ENCODE measurements at regions of chr11 and their contacts with region 1.

Region 1: GRCh38 chr11:47248664-47249377 is at the start of gene ACP2:
- DNase-seq: peak; percentile 70 to 93 (median 85)
- ATAC-seq: peak; percentile 97
- H3K4me3 ChIP-seq: peak within 1 kb of the TSS; percentile 81 to 90
- H3K4me3 Mint-ChIP-seq: peak within 1 kb of the TSS; percentile 100
- H3K27ac ChIP-seq: peak within 1 kb of the TSS; percentile 63 to 83
- H3K27ac Mint-ChIP-seq: peak within 1 kb of the TSS; percentile 100
- H3K4me1 ChIP-seq: peaks cover 17% of the 10 kb centered on the region
- H3K4me1 Mint-ChIP-seq: peaks cover 32% of the 10 kb centered on the region
- H3K27me3 ChIP-seq: no peaks in the 10 kb centered on the region
- H3K27me3 Mint-ChIP-seq: no peaks in the 10 kb centered on the region
- CTCF ChIP-seq: no peak
- total RNA-seq, gene ACP2: 18.3 to 22.6 TPM

Region 2: GRCh38 chr11:46936138-46937110 is 312.4 kb before region 1 on chr11 and contains the start of gene CSTPP1:
- CTCF ChIA-PET with region 1: no interaction called
- POLR2A ChIA-PET with region 1: interaction called, 3 read pairs
- intact Hi-C with region 1: loop called in 1 of 2 experiments (anchors 1 kb)
- DNase-seq: peak; percentile 80 to 97 (median 93)
- ATAC-seq: peak; percentile 96
- H3K4me3 ChIP-seq: peak within 1 kb of the TSS; percentile 73 to 82
- H3K4me3 Mint-ChIP-seq: peak within 1 kb of the TSS; percentile 97
- H3K27ac ChIP-seq: peak within 1 kb of the TSS; percentile 58 to 71
- H3K27ac Mint-ChIP-seq: peak within 1 kb of the TSS; percentile 95
- H3K4me1 ChIP-seq: peaks cover 9% of the 10 kb centered on the region
- H3K4me1 Mint-ChIP-seq: peaks cover 20% of the 10 kb centered on the region
- H3K27me3 ChIP-seq: no peaks in the 10 kb centered on the region
- H3K27me3 Mint-ChIP-seq: peaks cover 6% of the 10 kb centered on the region
- CTCF ChIP-seq: no peak
- total RNA-seq, gene CSTPP1: 4.1 to 4.6 TPM

Region 3: GRCh38 chr11:47213985-47214564 is 34.7 kb before region 1 on chr11:
- CTCF ChIA-PET with region 1: interaction called, 12 read pairs
- POLR2A ChIA-PET with region 1: interaction called, 29 read pairs
- intact Hi-C with region 1: loop called (anchors 1 kb)
- DNase-seq: peak; percentile 64 to 90 (median 84)
- ATAC-seq: peak; percentile 67
- H3K4me3 ChIP-seq: peak overlapping the region; percentile 65 to 95
- H3K4me3 Mint-ChIP-seq: peak overlapping the region; percentile 96
- H3K27ac ChIP-seq: peak overlapping the region; percentile 85 to 93
- H3K27ac Mint-ChIP-seq: peak overlapping the region; percentile 97
- H3K4me1 ChIP-seq: peaks cover 16% of the 10 kb centered on the region
- H3K4me1 Mint-ChIP-seq: peaks cover 31% of the 10 kb centered on the region
- H3K27me3 ChIP-seq: no peaks in the 10 kb centered on the region
- H3K27me3 Mint-ChIP-seq: no peaks in the 10 kb centered on the region
- CTCF ChIP-seq: no peak

Region 4: GRCh38 chr11:47259178-47259977 is 10.6 kb after region 1 on chr11:
- CTCF ChIA-PET with region 1: interaction called, 23 read pairs
- POLR2A ChIA-PET with region 1: interaction called, 8 read pairs
- intact Hi-C with region 1: no loop called
- DNase-seq: peak in 4 of 9 experiments; percentile 39 to 61 (median 48)
- ATAC-seq: peak; percentile 90
- H3K4me3 ChIP-seq: no peak overlapping the region
- H3K4me3 Mint-ChIP-seq: no peak overlapping the region
- H3K27ac ChIP-seq: no peak overlapping the region
- H3K27ac Mint-ChIP-seq: no peak overlapping the region
- H3K4me1 ChIP-seq: peaks cover 10% of the 10 kb centered on the region
- H3K4me1 Mint-ChIP-seq: peaks cover 10% of the 10 kb centered on the region
- H3K27me3 ChIP-seq: no peaks in the 10 kb centered on the region
- H3K27me3 Mint-ChIP-seq: no peaks in the 10 kb centered on the region
- CTCF ChIP-seq: peak; percentile 23

Region 5: DNA sequence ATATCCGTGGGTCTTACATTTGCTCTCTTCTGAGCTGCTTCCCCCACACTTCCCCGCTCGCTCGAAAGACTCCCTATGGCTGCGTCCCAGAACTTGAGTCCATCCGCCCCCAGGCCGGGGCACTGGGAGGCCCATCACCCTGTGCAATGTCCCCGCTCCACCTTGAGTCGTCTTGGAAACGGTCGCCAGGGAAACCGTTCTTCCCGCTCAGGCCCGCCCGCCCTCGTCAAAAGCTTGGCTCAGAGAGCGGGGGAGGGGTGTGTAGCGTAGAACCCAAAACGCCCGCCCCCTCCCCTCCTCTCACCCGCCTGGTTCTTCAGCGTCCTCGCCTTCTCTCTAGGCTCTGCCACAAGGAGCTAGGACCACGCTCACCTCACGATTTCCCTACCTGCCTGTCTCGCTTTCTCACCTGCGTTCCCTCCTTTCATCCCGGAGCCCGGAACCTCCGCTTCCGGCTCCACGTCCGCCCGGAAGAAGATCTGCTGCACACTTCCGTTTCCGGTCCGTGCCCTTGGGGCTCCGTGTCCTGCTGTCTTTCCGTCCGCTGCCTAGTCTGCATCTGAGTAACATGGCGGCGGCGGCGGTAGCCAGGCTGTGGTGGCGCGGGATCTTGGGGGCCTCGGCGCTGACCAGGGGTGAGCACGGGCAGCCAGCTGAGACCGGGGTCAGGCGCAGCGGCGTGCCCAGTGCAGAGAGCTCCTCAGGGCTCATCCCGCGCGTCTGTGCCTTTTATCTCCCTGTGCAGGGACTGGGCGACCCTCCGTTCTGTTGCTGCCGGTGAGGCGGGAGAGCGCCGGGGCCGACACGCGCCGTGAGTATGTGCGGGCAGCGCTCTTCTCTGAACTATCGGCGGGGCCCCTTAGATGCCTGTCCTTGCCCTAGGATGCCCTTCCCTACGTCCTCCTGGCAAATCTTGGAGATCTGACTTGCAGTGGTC is 330.0 kb after region 1 on chr11 and contains the starts of genes KBTBD4 and NDUFS3:
- CTCF ChIA-PET with region 1: no interaction called
- POLR2A ChIA-PET with region 1: no interaction called
- intact Hi-C with region 1: loop called (anchors 1 kb)
- DNase-seq: peak; percentile 74 to 95 (median 89)
- ATAC-seq: peak; percentile 94
- H3K4me3 ChIP-seq: peak within 1 kb of the TSS; percentile 90 to 92
- H3K4me3 Mint-ChIP-seq: peak within 1 kb of the TSS; percentile 99
- H3K27ac ChIP-seq: peak within 1 kb of the TSS; percentile 76 to 84
- H3K27ac Mint-ChIP-seq: peak within 1 kb of the TSS; percentile 97
- H3K4me1 ChIP-seq: peaks cover 31% of the 10 kb centered on the region
- H3K4me1 Mint-ChIP-seq: peaks cover 54% of the 10 kb centered on the region
- H3K27me3 ChIP-seq: no peaks in the 10 kb centered on the region
- H3K27me3 Mint-ChIP-seq: no peaks in the 10 kb centered on the region
- CTCF ChIP-seq: no peak
- total RNA-seq, gene KBTBD4: 31.8 to 32.6 TPM
- total RNA-seq, gene NDUFS3: 159 to 179 TPM